ENCODE measurements at regions of chr10 and their contacts with region 1.

Region 1: GRCh38 chr10:110137142-110137545 is 70.3 kb upstream of the MXI1 start:
- DNase-seq: peak in 1 of 2 experiments; percentile 57
- H3K4me3 ChIP-seq: no peak overlapping the region
- H3K27ac ChIP-seq: no peak overlapping the region
- H3K4me1 ChIP-seq: 0 out of 2 replicates have a peak, but pooled peaks cover 4% of the 10 kb centered on the region
- H3K27me3 ChIP-seq: no peaks in the 10 kb centered on the region
- CTCF ChIP-seq: peak; percentile 81

Region 2: GRCh38 chr10:109883859-109884771 is 253.0 kb before region 1 on chr10:
- CTCF ChIA-PET with region 1: interaction called, 9 read pairs
- POLR2A ChIA-PET with region 1: no interaction called
- intact Hi-C with region 1: loop called (anchors 1 kb)
- DNase-seq: peak; percentile 63 to 65
- H3K4me3 ChIP-seq: no peak overlapping the region
- H3K27ac ChIP-seq: no peak overlapping the region
- H3K4me1 ChIP-seq: no peaks in the 10 kb centered on the region
- H3K27me3 ChIP-seq: no peaks in the 10 kb centered on the region
- CTCF ChIP-seq: peak; percentile 88

Region 3: GRCh38 chr10:110007701-110008517 is 129.2 kb before region 1 on chr10 and contains the start of gene ADD3:
- CTCF ChIA-PET with region 1: no interaction called
- POLR2A ChIA-PET with region 1: no interaction called
- intact Hi-C with region 1: loop called (anchors 10 kb)
- DNase-seq: peak; percentile 49 to 79
- H3K4me3 ChIP-seq: peak within 1 kb of the TSS; percentile 91
- H3K27ac ChIP-seq: no peak within 1 kb of the TSS
- H3K4me1 ChIP-seq: peaks cover 36% of the 10 kb centered on the region
- H3K27me3 ChIP-seq: no peaks in the 10 kb centered on the region
- CTCF ChIP-seq: no peak
- total RNA-seq, gene ADD3: 61.7 and 77.7 TPM in 2 replicates

Region 4: GRCh38 chr10:110225756-110226542 is 88.8 kb after region 1 on chr10:
- CTCF ChIA-PET with region 1: interaction called, 3 read pairs
- POLR2A ChIA-PET with region 1: interaction called, 22 read pairs
- intact Hi-C with region 1: loop called (anchors 1 kb)
- DNase-seq: peak; percentile 76 to 80
- H3K4me3 ChIP-seq: peak overlapping the region; percentile 66
- H3K27ac ChIP-seq: peak overlapping the region; percentile 59
- H3K4me1 ChIP-seq: peaks cover 15% of the 10 kb centered on the region
- H3K27me3 ChIP-seq: no peaks in the 10 kb centered on the region
- CTCF ChIP-seq: peak; percentile 61

Region 5: GRCh38 chr10:110279407-110279986 is 142.4 kb after region 1 on chr10:
- CTCF ChIA-PET with region 1: interaction called, 3 read pairs
- POLR2A ChIA-PET with region 1: interaction called, 6 read pairs
- intact Hi-C with region 1: loop called (anchors 1 kb)
- DNase-seq: peak; percentile 20 to 39
- H3K4me3 ChIP-seq: no peak overlapping the region
- H3K27ac ChIP-seq: no peak overlapping the region
- H3K4me1 ChIP-seq: no peaks in the 10 kb centered on the region
- H3K27me3 ChIP-seq: no peaks in the 10 kb centered on the region
- CTCF ChIP-seq: peak; percentile 68

Region 6: DNA sequence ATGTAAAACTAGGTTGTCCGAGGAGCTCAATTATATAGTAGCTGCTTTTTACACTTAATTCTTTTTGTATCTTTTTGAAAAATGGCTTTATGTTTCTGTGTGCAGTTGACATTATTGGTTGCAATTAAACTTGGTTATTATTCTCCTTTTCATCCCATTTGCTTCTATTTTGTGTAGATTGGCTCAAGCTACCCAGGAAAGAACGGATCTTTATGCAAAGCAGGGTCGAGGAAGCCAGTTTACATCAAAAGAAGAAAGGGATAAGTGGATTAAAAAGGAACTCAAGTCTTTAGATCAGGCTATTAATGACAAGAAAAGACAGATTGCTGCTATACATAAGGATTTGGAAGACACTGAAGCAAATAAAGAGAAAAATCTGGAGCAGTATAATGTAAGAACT is 446.9 kb after region 1 on chr10:
- CTCF ChIA-PET with region 1: no interaction called
- POLR2A ChIA-PET with region 1: no interaction called
- intact Hi-C with region 1: loop called (anchors 10 kb)
- DNase-seq: no peak
- H3K4me3 ChIP-seq: no peak overlapping the region
- H3K27ac ChIP-seq: no peak overlapping the region
- H3K4me1 ChIP-seq: no peaks in the 10 kb centered on the region
- H3K27me3 ChIP-seq: no peaks in the 10 kb centered on the region
- CTCF ChIP-seq: no peak